ENCODE measurements at regions of chr11 and their contacts with region 1.

Region 1: GRCh38 chr11:75597636-75598035 is 35.6 kb downstream of the SERPINH1 start:
- DNase-seq: no peak
- H3K4me3 ChIP-seq: no peak overlapping the region
- H3K27ac ChIP-seq: no peak overlapping the region
- H3K4me1 ChIP-seq: no peaks in the 10 kb centered on the region
- H3K27me3 ChIP-seq: no peaks in the 10 kb centered on the region
- CTCF ChIP-seq: no peak
- EP300 ChIP-seq: no peak
- POLR2A ChIP-seq: no peak

Region 2: GRCh38 chr11:75625991-75626888 is 28.6 kb after region 1 on chr11:
- intact Hi-C with region 1: loop called in 1 of 4 experiments (anchors 1 kb)
- DNase-seq: no peak
- H3K4me3 ChIP-seq: no peak overlapping the region
- H3K27ac ChIP-seq: no peak overlapping the region
- H3K4me1 ChIP-seq: peaks cover 7% of the 10 kb centered on the region
- H3K27me3 ChIP-seq: no peaks in the 10 kb centered on the region
- CTCF ChIP-seq: no peak
- EP300 ChIP-seq: no peak
- POLR2A ChIP-seq: no peak

Region 3: DNA sequence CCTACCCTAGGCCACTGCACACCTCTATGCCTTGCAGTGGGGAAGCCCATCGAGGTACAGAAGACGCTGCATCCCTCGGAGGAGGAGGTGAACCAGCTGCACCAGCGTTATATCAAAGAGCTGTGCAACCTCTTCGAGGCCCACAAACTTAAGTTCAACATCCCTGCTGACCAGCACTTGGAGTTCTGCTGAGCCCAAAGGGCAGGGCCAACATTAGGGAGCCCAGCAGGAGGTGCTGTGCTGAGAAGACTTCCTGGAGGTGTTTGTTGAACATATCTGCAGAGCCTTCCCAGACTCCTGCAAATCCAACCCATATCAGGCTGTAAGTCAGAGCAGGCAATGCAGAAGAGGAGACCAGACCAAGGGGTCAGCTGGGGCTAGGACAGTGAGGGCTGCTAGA is 133.5 kb after region 1 on chr11:
- intact Hi-C with region 1: no loop called
- DNase-seq: no peak
- H3K4me3 ChIP-seq: no peak overlapping the region
- H3K27ac ChIP-seq: no peak overlapping the region
- H3K4me1 ChIP-seq: no peaks in the 10 kb centered on the region
- H3K27me3 ChIP-seq: no peaks in the 10 kb centered on the region
- CTCF ChIP-seq: no peak
- EP300 ChIP-seq: no peak
- POLR2A ChIP-seq: no peak